A549 (cell line): ENCODE measurements at regions of chr1 and their contacts with region 1.

Region 1: DNA sequence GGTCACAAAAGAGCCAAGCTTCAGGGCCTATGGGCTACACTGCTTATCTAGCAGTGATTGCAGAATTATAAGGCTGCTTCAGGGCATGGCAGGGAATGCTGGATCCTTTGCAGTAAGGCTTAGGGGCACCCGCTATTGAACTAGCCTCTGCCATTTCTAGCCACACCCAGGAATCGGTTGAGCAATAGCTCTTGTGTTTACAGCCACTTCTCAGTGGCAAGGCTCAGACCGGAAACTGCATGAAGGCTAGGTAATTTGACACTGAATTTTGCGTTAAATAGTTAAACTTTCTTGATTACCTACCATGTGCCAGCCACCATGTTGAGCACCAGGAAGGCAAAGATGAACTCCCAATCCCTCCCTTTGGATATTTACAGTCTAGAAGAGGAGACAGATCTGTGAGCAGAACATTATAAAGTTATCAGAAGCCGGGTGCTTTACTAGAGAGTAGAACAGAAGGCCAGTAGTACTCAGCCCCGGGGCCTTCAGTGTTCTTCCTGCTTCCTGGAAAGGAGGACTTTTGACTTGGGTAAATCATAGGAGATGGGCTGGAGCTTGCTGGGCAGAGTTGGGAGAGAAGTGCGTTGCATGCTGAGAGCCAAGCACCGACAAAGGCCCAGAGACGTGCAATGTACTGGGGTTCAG is 98.6 kb upstream of the LPGAT1 start:
- DNase-seq: peak; percentile 51 to 80
- ATAC-seq: peak; percentile 55 to 72; a peak in 4 of 6 replicates
- H3K4me3 ChIP-seq: no peak overlapping the region
- H3K27ac ChIP-seq: peak overlapping the region; percentile 63 to 85
- H3K4me1 ChIP-seq: peaks cover 54% of the 10 kb centered on the region
- CTCF ChIP-seq: no peak
- EP300 ChIP-seq: no peak
- POLR2A ChIP-seq: no peak
- RAD21 ChIP-seq: no peak

Region 2: GRCh38 chr1:211944733-211945500 is 15.8 kb after region 1 on chr1:
- CTCF ChIA-PET with region 1: interaction called, 21 read pairs
- POLR2A ChIA-PET with region 1: interaction called, 3 read pairs
- DNase-seq: peak; percentile 93 to 96
- ATAC-seq: peak; percentile 99 to 100
- H3K4me3 ChIP-seq: 0 out of 3 replicates have a peak overlapping the region, but pooled peaks have one; percentile 2
- H3K27ac ChIP-seq: peak overlapping the region; percentile 79 to 84
- H3K4me1 ChIP-seq: peaks cover 30% of the 10 kb centered on the region
- CTCF ChIP-seq: peak; percentile 95
- EP300 ChIP-seq: peak; percentile 10 to 52; a peak in 2 of 5 replicates
- POLR2A ChIP-seq: no peak
- RAD21 ChIP-seq: peak; percentile 95 to 97